Activated CD8-positive, alpha-beta T cell treated with anti-CD3 and anti-CD28 coated beads, Interleukin-2, amount 10 ng/mL, durations not matched to agents 7 days and 5 days (primary cell): ENCODE measurements at regions of chr2 and their contacts with region 1.

Region 1: DNA sequence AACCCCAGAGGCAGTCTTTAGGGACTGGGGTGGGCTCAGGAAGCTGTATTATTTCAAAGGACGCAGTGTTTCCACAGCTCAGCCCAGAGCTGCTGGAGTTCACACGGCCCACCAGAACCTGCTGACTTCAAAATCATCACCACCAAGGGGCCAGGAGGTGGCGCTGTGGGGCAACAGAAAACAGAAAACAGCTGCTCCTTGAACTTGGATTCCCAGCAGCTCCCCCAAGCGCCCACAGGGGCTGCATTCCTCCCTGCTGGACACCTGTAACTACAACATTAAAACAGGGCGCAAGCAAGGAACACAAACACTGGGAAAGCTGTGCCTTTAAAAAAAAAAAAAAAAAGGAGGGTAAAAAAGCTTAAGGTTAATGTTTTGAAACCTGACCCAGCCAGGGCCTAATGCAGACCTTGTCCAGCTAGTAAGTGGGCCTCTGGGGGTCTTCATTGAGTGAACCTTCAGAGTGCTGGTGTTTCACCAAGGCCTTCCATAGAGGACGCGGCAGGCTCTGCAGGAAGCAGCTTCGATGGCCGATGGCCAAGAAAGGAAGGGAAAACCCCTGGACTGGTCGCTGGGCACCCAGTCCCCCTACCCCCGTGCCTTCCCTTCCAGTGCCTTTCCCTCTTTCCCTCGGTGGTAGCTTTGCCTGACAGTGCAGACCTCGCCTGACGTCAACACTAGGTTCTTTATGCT is 25.9 kb downstream of the MLPH start:
- DNase-seq: peak; percentile 84
- ATAC-seq: peak; percentile 87
- H3K4me3 Mint-ChIP-seq: no peak overlapping the region
- H3K27ac Mint-ChIP-seq: no peak overlapping the region
- H3K4me1 Mint-ChIP-seq: no peaks in the 10 kb centered on the region
- H3K27me3 Mint-ChIP-seq: peaks cover 5% of the 10 kb centered on the region

Region 2: GRCh38 chr2:237085248-237086221 is 427.4 kb before region 1 on chr2 and contains the start of gene COPS8:
- CTCF ChIA-PET with region 1: interaction called, 10 read pairs
- POLR2A ChIA-PET with region 1: no interaction called
- DNase-seq: peak; percentile 94
- ATAC-seq: peak; percentile 99
- H3K4me3 Mint-ChIP-seq: peak within 1 kb of the TSS; percentile 91
- H3K27ac Mint-ChIP-seq: peak within 1 kb of the TSS; percentile 97
- H3K4me1 Mint-ChIP-seq: peaks cover 13% of the 10 kb centered on the region
- H3K27me3 Mint-ChIP-seq: no peaks in the 10 kb centered on the region
- total RNA-seq, gene COPS8: 39.5 to 42.2 TPM

Region 3: DNA sequence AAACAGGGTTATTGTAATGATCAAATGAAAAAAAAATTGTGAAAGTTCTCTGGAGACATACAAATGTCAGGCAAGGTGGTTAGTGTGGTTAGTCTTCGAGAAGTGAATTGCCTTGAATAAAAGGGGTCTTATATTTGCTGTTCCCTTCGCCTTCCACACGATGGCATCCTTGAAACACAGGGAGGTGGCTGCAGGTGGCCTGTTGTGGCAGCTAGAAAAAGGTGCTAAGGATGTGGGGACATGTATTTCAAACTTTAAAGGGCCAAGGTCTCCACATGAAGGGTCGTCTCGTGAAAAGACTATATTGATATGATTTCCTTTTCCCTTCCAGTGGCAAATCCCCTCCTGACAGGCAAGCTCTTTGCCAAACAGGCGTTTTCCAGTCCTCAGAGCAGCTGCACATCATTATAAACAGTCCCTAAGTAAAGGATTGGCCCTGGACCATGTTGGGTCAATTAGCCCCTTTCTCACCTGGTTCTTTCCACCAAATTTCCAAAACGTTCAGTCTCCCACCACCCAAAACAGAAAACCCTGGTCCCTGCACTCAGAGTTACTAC is 358.8 kb before region 1 on chr2:
- CTCF ChIA-PET with region 1: interaction called, 11 read pairs
- POLR2A ChIA-PET with region 1: no interaction called
- DNase-seq: peak; percentile 74
- ATAC-seq: peak; percentile 59
- H3K4me3 Mint-ChIP-seq: no peak overlapping the region
- H3K27ac Mint-ChIP-seq: no peak overlapping the region
- H3K4me1 Mint-ChIP-seq: peaks cover 35% of the 10 kb centered on the region
- H3K27me3 Mint-ChIP-seq: no peaks in the 10 kb centered on the region

Region 4: GRCh38 chr2:237500681-237501424 is 12.1 kb before region 1 on chr2:
- CTCF ChIA-PET with region 1: interaction called, 20 read pairs
- POLR2A ChIA-PET with region 1: no interaction called
- DNase-seq: no peak
- ATAC-seq: no peak
- H3K4me3 Mint-ChIP-seq: no peak overlapping the region
- H3K27ac Mint-ChIP-seq: no peak overlapping the region
- H3K4me1 Mint-ChIP-seq: no peaks in the 10 kb centered on the region
- H3K27me3 Mint-ChIP-seq: peaks cover 18% of the 10 kb centered on the region

Region 5: GRCh38 chr2:237524631-237525030 is 11.7 kb after region 1 on chr2:
- CTCF ChIA-PET with region 1: interaction called, 10 read pairs
- POLR2A ChIA-PET with region 1: no interaction called
- DNase-seq: no peak
- ATAC-seq: no peak
- H3K4me3 Mint-ChIP-seq: no peak overlapping the region
- H3K27ac Mint-ChIP-seq: no peak overlapping the region
- H3K4me1 Mint-ChIP-seq: no peaks in the 10 kb centered on the region
- H3K27me3 Mint-ChIP-seq: no peaks in the 10 kb centered on the region

Region 6: GRCh38 chr2:237529452-237530402 is 16.8 kb after region 1 on chr2:
- CTCF ChIA-PET with region 1: interaction called, 11 read pairs
- POLR2A ChIA-PET with region 1: no interaction called
- DNase-seq: no peak
- ATAC-seq: no peak
- H3K4me3 Mint-ChIP-seq: no peak overlapping the region
- H3K27ac Mint-ChIP-seq: no peak overlapping the region
- H3K4me1 Mint-ChIP-seq: no peaks in the 10 kb centered on the region
- H3K27me3 Mint-ChIP-seq: no peaks in the 10 kb centered on the region

Region 7: GRCh38 chr2:237572021-237572741 is 59.3 kb after region 1 on chr2:
- CTCF ChIA-PET with region 1: interaction called, 88 read pairs
- POLR2A ChIA-PET with region 1: interaction called, 4 read pairs
- DNase-seq: peak; percentile 89
- ATAC-seq: peak; percentile 98
- H3K4me3 Mint-ChIP-seq: no peak overlapping the region
- H3K27ac Mint-ChIP-seq: no peak overlapping the region
- H3K4me1 Mint-ChIP-seq: peaks cover 5% of the 10 kb centered on the region
- H3K27me3 Mint-ChIP-seq: no peaks in the 10 kb centered on the region

Region 8: DNA sequence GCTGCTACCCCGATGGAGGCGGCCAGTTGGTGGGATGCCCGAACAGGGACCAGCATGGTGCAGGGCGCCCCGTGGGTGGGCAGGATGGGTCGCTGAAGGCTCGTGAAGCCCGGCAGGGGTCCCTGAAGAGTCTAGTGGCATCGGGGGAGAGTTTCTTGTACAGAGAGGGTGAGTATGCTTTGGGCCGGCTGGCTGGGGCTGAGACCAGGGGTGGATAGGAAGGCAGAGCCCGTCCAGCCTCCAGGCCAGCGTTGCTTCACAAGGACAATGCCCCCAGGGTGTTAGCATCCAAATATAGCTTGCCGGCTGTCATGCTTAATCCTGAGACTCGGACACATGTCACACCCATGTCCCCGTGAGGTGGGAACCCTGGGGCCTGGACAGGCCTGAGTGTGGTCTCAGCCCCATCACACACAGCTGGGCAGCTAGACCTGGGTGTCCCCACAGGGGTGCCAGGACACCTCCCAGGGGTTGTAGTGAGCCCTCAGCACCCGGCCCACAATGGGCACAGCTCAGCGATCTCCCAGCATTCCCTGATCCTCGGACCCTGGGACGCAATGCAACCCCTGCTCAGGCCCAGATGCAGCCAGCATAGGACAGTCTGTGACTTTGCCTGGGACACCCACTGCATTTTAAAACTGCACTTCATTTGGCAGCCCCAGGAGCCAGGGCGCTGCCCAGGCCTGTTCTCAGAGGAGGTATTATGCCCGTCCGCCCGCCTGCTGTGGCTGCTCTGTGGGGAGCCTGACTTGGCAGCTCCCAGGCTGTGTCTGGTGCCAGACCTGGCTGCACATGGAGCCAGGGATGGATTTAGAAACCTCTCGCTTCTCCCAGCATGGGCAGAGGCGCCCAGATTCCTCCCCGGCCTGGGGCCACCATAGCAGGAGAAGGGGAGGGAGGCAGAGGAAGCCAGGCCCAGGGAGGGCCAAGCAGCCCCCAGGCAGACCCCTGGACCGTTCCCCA is 382.9 kb after region 1 on chr2:
- CTCF ChIA-PET with region 1: no interaction called
- POLR2A ChIA-PET with region 1: no interaction called
- DNase-seq: no peak
- ATAC-seq: no peak
- H3K4me3 Mint-ChIP-seq: no peak overlapping the region
- H3K27ac Mint-ChIP-seq: no peak overlapping the region
- H3K4me1 Mint-ChIP-seq: peaks cover 62% of the 10 kb centered on the region
- H3K27me3 Mint-ChIP-seq: no peaks in the 10 kb centered on the region